Activated CD4-positive, alpha-beta T cell treated with anti-CD3 and anti-CD28 coated beads, Interleukin-2, amount 10 ng/mL, durations not matched to agents 24 days and 14 days (primary cell): ENCODE measurements at regions of chr5 and their contacts with region 1.

Region 1: DNA sequence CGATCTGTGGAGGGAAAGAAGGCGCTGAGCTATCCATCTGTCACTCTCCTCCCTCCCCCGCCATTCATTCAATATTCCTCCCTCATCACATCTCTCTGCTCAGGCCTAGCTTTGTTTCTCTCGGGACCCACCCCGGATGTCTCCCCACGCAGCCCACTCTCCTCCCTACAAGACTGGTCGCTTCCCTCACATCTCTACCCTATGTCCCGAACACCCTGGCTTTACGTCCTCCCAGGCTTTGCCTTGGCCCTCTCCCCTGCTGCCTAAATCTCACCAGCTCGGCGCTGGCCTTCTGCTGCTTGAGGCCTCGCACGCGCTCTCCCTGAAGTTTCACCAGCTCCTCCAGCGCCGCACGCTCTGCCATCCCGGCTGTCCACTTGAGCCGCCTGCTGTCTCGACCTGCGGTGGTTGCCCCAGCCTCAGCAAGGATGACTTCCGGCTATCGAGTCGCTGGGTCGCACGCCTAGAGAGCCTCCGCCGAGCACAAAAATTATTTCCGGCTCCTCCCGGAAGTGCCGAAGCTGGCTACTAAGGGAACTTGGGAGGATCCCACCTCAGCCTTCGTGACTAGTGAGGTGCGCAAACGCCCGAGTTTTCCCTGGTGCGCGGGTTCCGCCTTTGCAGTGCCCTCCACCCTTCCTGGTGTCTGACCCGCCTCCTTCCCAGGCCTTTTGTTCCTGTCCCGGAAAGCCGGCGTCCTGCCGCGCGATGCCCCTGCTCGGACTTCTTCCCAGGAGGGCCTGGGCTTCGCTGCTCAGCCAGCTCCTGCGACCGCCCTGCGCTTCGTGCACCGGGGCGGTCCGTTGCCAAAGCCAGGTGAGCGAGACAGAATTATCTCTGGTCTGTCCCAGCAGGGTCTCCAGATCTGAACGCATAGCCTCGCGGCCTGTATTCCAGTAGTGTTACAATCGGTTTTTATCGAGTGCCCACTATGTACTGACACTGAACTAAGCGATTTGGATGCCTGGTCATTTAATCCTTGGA is at the starts of genes HARS1 and HARS2:
- DNase-seq: peak; percentile 96
- H3K4me3 Mint-ChIP-seq: peak within 1 kb of the TSS; percentile 98
- H3K27ac Mint-ChIP-seq: peak within 1 kb of the TSS; percentile 98
- H3K4me1 Mint-ChIP-seq: peaks cover 30% of the 10 kb centered on the region
- H3K27me3 Mint-ChIP-seq: no peaks in the 10 kb centered on the region
- total RNA-seq, gene HARS1: 109 and 115 TPM in 2 replicates
- total RNA-seq, gene HARS2: 28.0 and 29.6 TPM in 2 replicates

Region 2: GRCh38 chr5:140639148-140639979 is 51.9 kb before region 1 on chr5 and contains the start of gene TMCO6:
- intact Hi-C with region 1: loop called (anchors 2 kb)
- DNase-seq: peak; percentile 98
- H3K4me3 Mint-ChIP-seq: peak within 1 kb of the TSS; percentile 86
- H3K27ac Mint-ChIP-seq: peak within 1 kb of the TSS; percentile 90
- H3K4me1 Mint-ChIP-seq: peaks cover 37% of the 10 kb centered on the region
- H3K27me3 Mint-ChIP-seq: no peaks in the 10 kb centered on the region
- total RNA-seq, gene TMCO6: 38.1 and 41.9 TPM in 2 replicates